ENCODE measurements at regions of chr1 and their contacts with region 1.

Region 1: DNA sequence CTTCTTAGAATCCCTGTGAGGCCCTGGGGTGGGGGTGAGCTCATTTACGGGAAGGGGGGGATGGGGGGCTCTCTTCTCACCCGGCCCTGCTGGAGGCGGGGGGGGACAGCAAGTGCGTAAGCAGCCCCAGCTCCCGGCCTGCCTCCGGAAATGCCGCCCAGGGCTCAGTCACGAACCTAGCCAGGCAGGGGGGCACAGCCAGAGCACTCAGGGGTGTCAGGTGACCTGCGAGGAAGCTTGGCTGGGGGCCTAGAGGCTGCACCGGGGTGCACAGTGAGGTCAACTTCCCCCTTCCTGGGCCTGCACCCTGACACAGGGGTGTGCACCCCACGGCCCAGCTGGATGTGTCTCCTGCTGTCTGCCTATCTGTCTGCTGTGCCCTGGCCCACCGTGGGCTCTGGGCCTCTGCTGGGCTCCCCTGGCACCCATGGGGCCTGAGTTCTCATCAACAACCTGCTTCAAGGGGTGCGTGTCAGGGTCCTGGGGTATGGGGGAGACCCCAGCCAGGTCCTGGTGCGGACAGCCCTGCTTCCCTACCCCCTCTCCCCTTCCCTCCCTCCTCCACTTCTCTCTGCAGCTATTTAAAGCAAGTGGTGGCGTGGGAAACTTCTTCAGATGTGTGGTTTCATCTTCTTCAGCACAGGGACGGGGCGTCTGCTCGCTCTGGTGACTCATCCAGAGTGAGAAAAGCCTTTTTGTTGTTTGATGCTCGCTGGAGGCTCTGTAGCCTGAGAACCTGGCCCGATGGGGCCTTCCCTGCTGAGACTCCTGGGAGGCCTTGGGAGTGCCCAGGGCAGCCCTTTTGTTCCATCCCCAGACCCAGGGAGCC is 92.5 kb upstream of the RUNX3 start:
- DNase-seq: peak; percentile 86 to 99 (median 96)
- ATAC-seq: peak; percentile 79 to 90
- H3K4me3 Mint-ChIP-seq: peak overlapping the region; percentile 64 to 88 (median 80)
- H3K27ac Mint-ChIP-seq: peak overlapping the region; percentile 95 to 99 (median 97)
- H3K4me1 Mint-ChIP-seq: peaks cover 41 to 93% (median 88%) of the 10 kb centered on the region in 4 donors
- H3K27me3 Mint-ChIP-seq: no peaks in the 10 kb centered on the region

Region 2: GRCh38 chr1:24964811-24965570 is 57.6 kb before region 1 on chr1:
- POLR2A ChIA-PET with region 1: interaction called, 137 read pairs
- DNase-seq: peak; percentile 71 to 96 (median 92)
- ATAC-seq: peak; percentile 84 to 93
- H3K4me3 Mint-ChIP-seq: peak overlapping the region; percentile 86 to 97 (median 93)
- H3K27ac Mint-ChIP-seq: peak overlapping the region; percentile 95 to 98 (median 96)
- H3K4me1 Mint-ChIP-seq: peaks cover 40 to 81% (median 77%) of the 10 kb centered on the region in 4 donors
- H3K27me3 Mint-ChIP-seq: no peaks in the 10 kb centered on the region

Region 3: GRCh38 chr1:24987875-24988557 is 34.6 kb before region 1 on chr1:
- POLR2A ChIA-PET with region 1: interaction called, 139 read pairs
- DNase-seq: peak in 3 of 10 donors; percentile 42 to 64 (median 46)
- ATAC-seq: peak; percentile 50 to 80
- H3K4me3 Mint-ChIP-seq: peak overlapping the region in 9 of 10 donors; percentile 16 to 84 (median 75)
- H3K27ac Mint-ChIP-seq: peak overlapping the region; percentile 83 to 96 (median 90)
- H3K4me1 Mint-ChIP-seq: peaks cover 74 to 100% (median 98%) of the 10 kb centered on the region in 4 donors
- H3K27me3 Mint-ChIP-seq: no peaks in the 10 kb centered on the region

Region 4: DNA sequence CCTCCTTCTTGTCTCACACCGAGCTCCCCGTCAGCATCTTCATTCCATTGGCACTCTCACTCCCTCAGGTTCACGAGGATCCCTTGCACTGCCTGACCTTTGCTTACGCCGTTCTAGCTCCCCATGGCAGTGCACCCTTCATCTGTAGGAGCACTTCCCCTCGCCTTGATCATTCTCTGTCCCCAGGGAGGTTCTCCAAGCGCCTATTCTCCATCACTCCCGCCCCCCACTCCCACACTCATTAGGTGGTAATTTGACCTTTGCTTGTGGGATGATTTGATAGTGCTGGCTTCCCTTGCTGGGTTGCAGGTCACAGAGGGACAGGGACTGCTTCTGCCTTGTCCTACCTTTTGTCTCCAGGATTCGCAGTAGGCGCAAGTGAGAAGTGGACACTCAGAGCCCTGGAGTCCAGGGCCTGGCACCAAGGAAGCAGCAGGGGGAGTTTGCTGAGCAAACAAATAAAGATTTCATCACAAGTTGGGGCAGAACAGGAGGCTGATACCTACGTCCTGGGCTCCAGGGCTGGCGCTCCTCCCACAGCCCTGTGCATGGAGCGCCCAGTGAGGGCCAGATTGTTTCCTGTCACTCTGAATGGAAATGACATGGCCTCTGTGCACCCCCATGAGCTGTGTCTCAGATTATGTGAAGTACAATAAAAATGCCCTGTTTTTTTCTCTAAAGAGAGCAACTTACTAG is 10.5 kb before region 1 on chr1:
- POLR2A ChIA-PET with region 1: interaction called, 50 read pairs
- DNase-seq: peak in 2 of 10 donors; percentile 45 to 47
- ATAC-seq: peak; percentile 75 to 89
- H3K4me3 Mint-ChIP-seq: peak overlapping the region in 6 of 10 donors; percentile 40 to 69 (median 55)
- H3K27ac Mint-ChIP-seq: peak overlapping the region; percentile 46 to 93 (median 80)
- H3K4me1 Mint-ChIP-seq: peaks cover 21 to 68% (median 59%) of the 10 kb centered on the region in 4 donors
- H3K27me3 Mint-ChIP-seq: no peaks in the 10 kb centered on the region

Region 5: GRCh38 chr1:25048728-25049127 is 26.2 kb after region 1 on chr1:
- POLR2A ChIA-PET with region 1: no interaction called
- DNase-seq: no peak
- ATAC-seq: no peak
- H3K4me3 Mint-ChIP-seq: no peak overlapping the region
- H3K27ac Mint-ChIP-seq: peak overlapping the region in 2 of 10 donors; percentile 6 to 55
- H3K4me1 Mint-ChIP-seq: peaks cover 2 to 12% (median 7%) of the 10 kb centered on the region in 4 donors
- H3K27me3 Mint-ChIP-seq: peaks cover 0 to 9% (median 0%) of the 10 kb centered on the region in 5 donors

Region 6: GRCh38 chr1:25099343-25099951 is 76.9 kb after region 1 on chr1:
- POLR2A ChIA-PET with region 1: interaction called, 11 read pairs
- DNase-seq: peak in 6 of 10 donors; percentile 33 to 68 (median 47)
- ATAC-seq: peak; percentile 54 to 70
- H3K4me3 Mint-ChIP-seq: peak overlapping the region; percentile 65 to 89 (median 84)
- H3K27ac Mint-ChIP-seq: peak overlapping the region; percentile 46 to 94 (median 88)
- H3K4me1 Mint-ChIP-seq: peaks cover 51 to 82% (median 79%) of the 10 kb centered on the region in 4 donors
- H3K27me3 Mint-ChIP-seq: peaks cover 0 to 3% (median 0%) of the 10 kb centered on the region in 5 donors

Measured in naive thymus-derived CD8-positive, alpha-beta T cell (primary cell).